Activated CD4-positive, alpha-beta T cell treated with anti-CD3 and anti-CD28 coated beads, Interleukin-2, amount 10 ng/mL, durations not matched to agents 7 days and 5 days (primary cell): ENCODE measurements at regions of chrX and their contacts with region 1.

Region 1: DNA sequence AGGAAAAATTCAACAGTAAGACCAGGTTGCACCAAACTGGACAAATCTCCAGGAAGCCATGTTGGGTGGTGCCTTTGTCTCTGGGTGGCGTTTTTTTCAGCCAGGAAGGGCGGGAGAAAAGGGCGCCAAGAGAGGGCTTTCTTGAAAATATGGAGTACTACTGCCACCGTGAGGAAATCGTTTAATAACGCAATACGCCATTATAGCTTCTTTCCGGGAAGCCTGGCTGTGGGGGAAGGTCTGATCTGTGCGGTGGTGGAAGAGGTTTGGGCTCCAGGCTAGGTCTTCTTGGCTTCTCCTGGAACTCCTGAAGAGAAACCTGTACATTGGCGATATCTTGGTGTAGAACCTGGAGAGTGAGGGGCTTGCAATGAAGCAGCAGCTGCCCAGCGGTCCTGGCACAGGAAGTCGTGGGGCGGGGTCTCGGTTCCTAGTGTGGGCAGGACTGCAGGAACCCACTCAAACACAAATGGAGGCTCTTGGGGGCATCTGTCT is 202.6 kb downstream of the OR13H1 start:
- DNase-seq: no peak
- H3K4me3 Mint-ChIP-seq: no peak overlapping the region
- H3K27ac Mint-ChIP-seq: no peak overlapping the region
- H3K4me1 Mint-ChIP-seq: no peaks in the 10 kb centered on the region
- H3K27me3 Mint-ChIP-seq: no peaks in the 10 kb centered on the region

Region 2: DNA sequence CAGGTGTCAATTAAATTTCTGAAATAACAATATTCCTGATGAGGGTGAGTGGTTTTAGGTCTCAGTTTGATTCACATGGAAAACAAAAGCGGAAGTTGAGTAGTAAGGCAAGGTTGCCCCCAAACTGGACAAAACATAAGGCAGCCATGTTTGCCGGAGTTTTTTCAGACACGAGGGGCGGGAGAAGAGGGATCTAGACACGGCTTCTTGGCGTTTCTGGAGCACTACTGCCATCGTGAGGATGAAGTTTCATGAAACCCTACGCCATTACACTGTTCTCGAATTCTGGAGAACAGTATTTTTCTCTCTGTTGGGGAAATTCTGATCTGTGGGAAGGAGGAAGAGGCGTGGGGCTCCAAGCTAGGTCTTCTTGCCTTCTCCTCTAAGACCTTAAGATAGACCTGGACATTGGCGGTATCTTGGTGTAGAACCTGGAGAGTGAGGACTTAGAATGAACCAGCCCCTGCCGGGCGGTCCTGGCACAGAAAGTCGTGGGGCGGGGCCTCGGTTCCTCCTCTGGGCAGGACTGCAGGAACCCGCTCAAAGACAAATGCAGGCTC is 42.3 kb before region 1 on chrX:
- CTCF ChIA-PET with region 1: interaction called, 16 read pairs
- POLR2A ChIA-PET with region 1: no interaction called
- DNase-seq: no peak
- H3K4me3 Mint-ChIP-seq: no peak overlapping the region
- H3K27ac Mint-ChIP-seq: no peak overlapping the region
- H3K4me1 Mint-ChIP-seq: no peaks in the 10 kb centered on the region
- H3K27me3 Mint-ChIP-seq: no peaks in the 10 kb centered on the region

Region 3: DNA sequence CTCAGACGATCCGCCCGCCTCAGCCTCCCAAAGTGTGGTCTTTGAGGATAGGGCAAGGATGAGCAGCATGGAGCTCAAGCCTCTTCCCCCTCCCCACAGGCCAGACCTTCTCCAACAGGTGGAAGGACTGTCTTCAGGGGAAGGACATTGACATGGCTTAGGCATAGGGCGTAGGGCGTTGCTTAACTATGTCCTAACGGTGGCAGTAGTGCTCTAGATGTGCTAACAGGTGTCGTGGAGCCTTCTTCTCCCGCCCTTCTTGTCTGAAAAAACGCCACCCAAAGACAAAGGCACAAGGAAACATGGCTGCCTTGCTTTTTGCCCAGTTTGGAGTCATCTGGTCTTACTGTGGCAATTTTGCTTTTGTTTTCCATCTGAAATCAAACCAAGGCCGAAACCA is 17.2 kb after region 1 on chrX:
- CTCF ChIA-PET with region 1: interaction called, 12 read pairs
- POLR2A ChIA-PET with region 1: no interaction called
- DNase-seq: no peak
- H3K4me3 Mint-ChIP-seq: no peak overlapping the region
- H3K27ac Mint-ChIP-seq: no peak overlapping the region
- H3K4me1 Mint-ChIP-seq: no peaks in the 10 kb centered on the region
- H3K27me3 Mint-ChIP-seq: no peaks in the 10 kb centered on the region

Region 4: DNA sequence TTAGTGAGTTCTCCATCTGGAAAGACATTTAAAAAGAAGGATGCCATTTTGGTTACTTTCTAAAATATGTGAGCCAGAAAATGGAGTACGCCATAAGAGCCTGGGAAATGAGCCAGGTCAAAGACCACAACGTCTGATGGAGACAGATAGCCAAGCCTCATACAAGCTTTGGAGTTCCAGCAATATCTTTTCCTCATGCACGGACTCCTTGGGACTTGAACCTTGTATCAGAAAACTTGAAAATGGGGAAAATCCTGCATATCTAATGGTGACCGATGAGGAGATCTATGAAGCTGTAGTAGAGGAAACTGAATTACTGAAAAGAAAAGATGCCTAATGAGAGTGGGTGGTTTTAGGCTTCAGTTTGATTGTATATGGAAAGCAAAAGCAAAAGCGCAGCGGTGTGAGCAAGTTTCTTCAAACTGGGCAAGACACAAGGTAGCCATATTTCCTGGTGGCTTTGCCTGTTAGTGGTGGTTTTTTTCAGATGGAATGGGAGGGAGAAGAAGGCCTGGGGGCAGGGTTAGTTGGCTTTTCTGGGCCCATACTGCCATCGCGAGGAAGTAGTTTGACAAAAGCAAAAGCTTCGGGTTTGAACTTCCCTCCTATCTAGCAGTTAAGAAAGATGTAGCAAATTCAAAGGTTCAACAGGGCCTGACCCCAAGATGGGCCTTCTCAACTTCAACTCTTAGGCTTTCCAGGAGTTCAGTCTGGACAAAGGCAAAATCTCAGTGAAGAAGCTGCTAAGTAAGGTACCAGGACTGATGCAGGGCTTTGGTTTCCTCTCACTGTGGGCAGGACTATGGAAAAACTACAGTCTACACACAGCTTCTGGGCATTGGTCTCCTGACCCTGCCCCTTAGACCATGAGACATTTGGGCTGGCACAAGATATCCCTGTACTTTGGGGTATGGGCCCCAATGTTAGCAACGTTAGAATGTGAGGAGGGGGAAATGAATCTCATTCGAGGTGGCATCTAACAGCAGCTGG is 66.6 kb after region 1 on chrX:
- CTCF ChIA-PET with region 1: interaction called, 16 read pairs
- POLR2A ChIA-PET with region 1: no interaction called
- DNase-seq: peak; percentile 82
- H3K4me3 Mint-ChIP-seq: peak overlapping the region; percentile 75
- H3K27ac Mint-ChIP-seq: peak overlapping the region; percentile 97
- H3K4me1 Mint-ChIP-seq: peaks cover 34% of the 10 kb centered on the region
- H3K27me3 Mint-ChIP-seq: no peaks in the 10 kb centered on the region

Region 5: DNA sequence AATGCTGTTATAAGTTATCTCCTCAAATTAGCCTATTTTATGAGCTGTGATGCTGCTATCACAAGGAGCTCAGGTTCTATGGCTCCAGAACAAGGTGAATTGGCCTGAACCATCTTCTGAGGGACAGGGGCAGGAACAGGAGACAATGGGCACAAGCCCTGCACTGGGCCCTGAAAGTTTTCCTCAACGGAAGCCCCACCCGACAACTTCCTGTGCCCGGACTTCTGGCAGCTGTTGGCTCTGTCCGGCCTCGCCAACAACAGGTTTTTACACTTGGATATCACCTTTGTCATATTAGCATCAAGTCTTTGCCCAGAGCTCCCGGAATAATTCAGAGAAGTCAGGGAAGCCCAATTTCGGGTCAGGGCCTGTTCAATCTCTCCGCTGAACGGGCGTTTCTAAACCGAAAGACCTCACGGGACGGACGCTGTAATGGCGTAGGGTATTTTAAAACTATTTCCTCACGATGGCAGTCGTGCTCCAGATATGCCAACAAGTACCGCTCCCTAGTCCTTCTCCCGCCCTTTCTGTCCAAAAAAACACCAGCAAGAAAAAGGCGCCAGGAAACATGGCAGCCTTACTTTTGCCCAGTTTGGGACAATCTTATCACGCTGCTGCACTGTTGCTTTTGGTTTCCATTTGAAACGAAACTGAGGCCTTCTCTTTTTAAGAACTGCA is 75.6 kb after region 1 on chrX:
- CTCF ChIA-PET with region 1: interaction called, 10 read pairs
- POLR2A ChIA-PET with region 1: no interaction called
- DNase-seq: no peak
- H3K4me3 Mint-ChIP-seq: no peak overlapping the region
- H3K27ac Mint-ChIP-seq: peak overlapping the region; percentile 54
- H3K4me1 Mint-ChIP-seq: peaks cover 24% of the 10 kb centered on the region
- H3K27me3 Mint-ChIP-seq: no peaks in the 10 kb centered on the region